ENCODE measurements at regions of chr4 and their contacts with region 1.

Region 1: DNA sequence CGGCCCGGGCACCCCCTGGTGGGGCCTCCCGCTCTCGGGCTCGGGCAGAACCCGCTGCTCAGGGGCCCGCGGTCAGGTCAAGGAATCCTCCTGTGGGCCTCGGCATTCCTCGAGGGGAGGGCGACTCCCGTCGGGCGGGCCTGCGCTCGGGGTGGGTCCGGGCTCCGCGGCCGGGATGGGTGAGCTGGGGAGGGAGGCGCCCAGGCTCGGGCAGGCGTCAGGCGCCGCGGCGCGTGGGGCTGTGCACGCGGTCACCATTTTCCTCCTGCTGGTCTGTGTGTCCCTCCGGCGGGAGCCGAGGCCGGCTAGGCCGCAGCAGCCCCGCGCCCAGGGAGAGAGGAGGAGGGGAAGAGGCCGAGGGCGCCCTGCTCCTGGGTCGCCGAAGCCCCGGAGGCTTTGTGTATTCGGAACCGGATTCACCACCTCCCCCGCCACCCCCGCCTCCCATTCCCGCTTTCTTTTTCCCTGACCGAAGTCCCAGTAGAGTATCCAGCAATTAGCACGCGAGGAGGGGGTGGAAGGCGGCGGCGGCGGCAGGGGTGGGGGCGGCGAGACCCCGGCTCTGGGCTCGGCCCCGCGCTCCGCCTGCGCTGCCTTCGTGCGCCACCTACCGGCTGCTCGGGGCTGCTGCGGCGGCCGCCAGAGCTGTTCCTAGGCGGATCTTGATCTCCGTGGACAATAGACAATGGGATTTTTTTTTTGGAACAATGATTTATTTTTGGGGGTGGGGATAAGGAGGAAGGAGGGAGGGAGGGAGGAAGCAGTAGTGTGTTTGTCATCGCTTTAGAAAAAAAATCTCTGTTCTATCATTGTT is 99.0 kb upstream of the MAML3 start:
- DNase-seq: peak; percentile 77 to 90
- ATAC-seq: peak; percentile 93
- H3K4me3 ChIP-seq: peak overlapping the region; percentile 48 to 70
- H3K27ac ChIP-seq: peak overlapping the region in 1 of 2 donors; percentile 31
- H3K4me1 ChIP-seq: peaks cover 0 to 4% of the 10 kb centered on the region in 2 donors
- H3K27me3 ChIP-seq: no peaks in the 10 kb centered on the region

Region 2: GRCh38 chr4:139734875-139735380 is 518.0 kb before region 1 on chr4:
- intact Hi-C with region 1: loop called (anchors 2 to 5 kb)
- DNase-seq: peak; percentile 89 to 95
- ATAC-seq: peak; percentile 98
- H3K4me3 ChIP-seq: peak overlapping the region; percentile 57 to 72
- H3K27ac ChIP-seq: peak overlapping the region in 1 of 2 donors; percentile 2
- H3K4me1 ChIP-seq: peaks cover under 1 to 2% of the 10 kb centered on the region in 2 donors
- H3K27me3 ChIP-seq: no peaks in the 10 kb centered on the region

Region 3: DNA sequence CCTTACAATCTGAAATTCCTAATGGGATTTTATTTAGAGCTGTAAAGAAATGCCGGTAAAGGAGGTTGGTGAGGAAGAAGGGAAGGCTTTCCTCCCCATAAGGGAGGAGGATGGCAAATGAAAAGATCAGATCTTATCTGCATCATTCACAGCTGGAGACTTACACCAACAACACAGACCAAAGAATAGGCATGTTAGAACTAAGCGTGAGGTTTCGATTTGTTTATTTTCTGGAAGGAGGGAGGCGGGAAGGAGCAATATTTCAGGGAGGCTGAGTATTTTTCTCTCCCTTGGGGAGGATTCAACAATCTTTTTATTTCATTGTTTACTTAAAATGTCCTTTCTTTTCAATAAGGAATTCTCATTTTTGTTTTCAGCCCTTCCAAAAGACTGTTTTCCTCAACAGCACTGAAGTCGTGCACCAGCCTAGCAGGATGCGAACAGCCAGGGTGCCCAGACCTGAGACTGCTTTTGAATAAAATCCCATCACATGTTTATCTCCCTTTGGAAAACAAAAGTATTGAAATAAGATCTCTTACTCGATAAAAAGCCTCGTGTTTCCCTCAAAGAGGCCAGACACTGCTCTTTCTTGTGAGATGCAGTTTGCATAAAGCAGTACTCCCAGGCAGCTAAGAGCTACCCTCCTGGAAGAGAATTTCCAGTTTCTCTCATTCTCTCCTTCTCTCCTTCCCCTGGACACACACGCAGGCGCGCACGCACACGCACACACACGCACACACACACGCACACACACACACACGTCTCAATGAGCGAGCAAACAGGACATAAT is 351.2 kb before region 1 on chr4:
- intact Hi-C with region 1: loop called in 1 of 2 experiments (anchors 5 kb)
- DNase-seq: no peak
- ATAC-seq: peak; percentile 80
- H3K4me3 ChIP-seq: peak overlapping the region in 1 of 2 donors; percentile 45
- H3K27ac ChIP-seq: no peak overlapping the region
- H3K4me1 ChIP-seq: no peaks in the 10 kb centered on the region
- H3K27me3 ChIP-seq: no peaks in the 10 kb centered on the region

Region 4: DNA sequence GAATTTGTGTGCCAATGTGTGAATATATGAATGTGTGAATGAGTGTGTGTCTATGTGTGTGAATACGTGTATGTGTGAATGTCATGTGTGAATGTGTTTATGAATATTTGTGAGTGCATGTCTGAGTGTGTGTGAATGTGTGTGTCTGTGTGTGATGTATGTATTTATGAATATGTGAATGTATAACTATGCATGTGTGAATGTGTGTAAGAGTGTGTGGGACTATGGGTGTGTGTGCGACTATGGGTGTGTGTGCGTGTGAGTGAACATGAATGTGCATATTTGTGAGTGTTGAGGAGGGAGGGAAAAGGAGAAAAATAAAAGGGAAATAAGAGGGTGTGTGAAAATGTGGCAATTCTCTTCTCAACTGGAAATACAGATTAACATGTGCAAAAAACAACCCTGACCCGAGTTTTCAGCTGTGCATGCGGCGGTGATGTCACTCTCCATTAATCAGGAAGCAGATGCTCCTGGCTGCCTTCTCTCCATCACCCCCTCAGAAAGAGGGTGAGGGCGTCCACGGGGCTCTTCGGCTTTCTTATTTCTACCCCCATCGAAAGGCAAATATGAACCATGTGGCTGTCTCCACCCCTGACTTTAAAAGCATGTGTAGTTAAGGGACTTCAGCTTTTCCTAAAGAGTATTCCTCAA is 318.8 kb before region 1 on chr4:
- intact Hi-C with region 1: no loop called
- DNase-seq: no peak
- ATAC-seq: no peak
- H3K4me3 ChIP-seq: no peak overlapping the region
- H3K27ac ChIP-seq: no peak overlapping the region
- H3K4me1 ChIP-seq: no peaks in the 10 kb centered on the region
- H3K27me3 ChIP-seq: no peaks in the 10 kb centered on the region

Region 5: DNA sequence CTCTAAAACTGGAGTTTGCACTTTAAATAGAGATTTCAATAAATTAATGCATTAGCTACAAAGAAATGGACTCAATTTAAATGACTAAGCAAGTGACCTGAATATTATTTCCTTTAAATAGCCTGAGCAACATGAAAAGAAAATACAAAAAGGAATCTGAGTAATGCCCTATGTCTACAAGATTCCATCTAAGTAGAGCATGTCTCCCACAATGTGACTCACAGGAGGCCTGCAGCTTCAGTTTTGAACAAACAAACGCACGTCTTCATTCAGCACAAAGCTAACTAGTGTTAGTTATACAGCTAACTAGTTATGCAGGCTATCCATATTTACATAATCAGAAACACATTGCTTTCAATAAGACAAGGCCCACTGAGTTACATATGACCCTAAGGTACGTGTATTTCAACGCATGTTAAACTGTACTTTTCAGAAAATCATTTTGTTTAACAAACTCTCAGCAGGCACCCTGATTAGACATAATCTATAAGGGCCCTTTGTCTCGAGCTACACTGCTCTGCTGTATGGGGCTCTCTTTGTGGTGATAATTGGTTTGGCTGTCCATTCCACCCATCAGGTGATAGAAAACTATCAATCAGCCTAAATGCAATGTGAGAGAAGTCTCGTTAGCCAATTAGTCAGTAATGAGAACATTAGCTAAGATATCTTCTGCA is 215.5 kb before region 1 on chr4:
- intact Hi-C with region 1: no loop called
- DNase-seq: no peak
- ATAC-seq: no peak
- H3K4me3 ChIP-seq: no peak overlapping the region
- H3K27ac ChIP-seq: peak overlapping the region in 1 of 2 donors; percentile 48
- H3K4me1 ChIP-seq: peaks cover 7 to 11% of the 10 kb centered on the region in 2 donors
- H3K27me3 ChIP-seq: no peaks in the 10 kb centered on the region

Region 6: DNA sequence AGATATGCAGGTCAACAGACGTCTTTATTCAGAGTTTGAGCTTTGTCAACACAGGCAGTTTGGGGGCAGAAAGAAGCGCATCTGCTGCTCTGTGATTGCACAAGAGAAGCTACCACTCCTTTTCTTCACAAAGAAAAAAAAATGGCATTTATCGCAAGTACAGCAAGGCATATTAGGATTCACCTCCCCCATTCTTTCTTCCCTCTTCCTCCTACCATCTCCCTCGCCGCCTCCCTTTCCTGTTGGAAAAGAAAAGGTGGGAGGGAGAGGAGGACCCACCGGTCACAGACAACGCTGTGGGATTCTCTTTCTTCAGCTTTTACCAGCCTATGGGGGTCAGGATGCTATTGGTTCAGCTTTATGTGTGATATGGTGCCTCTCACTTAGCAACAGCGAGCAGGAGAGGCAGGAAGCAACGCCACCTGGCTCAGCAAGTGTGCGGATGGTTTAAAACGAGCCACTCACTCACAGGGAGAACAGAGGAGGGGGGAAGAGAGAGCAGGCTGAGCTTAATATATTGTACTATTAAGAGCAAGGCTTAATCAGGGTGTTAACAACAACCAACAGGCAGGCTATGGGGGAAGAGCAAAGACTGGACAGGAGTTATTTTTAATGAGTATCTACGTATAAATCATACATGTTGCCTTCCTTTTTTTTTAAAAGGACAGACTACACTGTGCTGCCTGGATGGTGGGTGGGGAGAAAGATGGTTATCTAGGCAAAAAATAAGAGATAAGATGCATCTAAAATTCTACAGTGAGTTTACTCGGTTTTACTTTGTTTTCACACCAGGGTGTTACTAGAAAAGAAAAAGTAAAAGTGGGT is 203.7 kb before region 1 on chr4:
- intact Hi-C with region 1: loop called (anchors 5 kb)
- DNase-seq: peak in 1 of 2 donors; percentile 46
- ATAC-seq: peak; percentile 80
- H3K4me3 ChIP-seq: peak overlapping the region; percentile 7 to 55
- H3K27ac ChIP-seq: peak overlapping the region in 1 of 2 donors; percentile 1
- H3K4me1 ChIP-seq: peaks cover 3 to 6% of the 10 kb centered on the region in 2 donors
- H3K27me3 ChIP-seq: no peaks in the 10 kb centered on the region

Region 7: GRCh38 chr4:140308366-140309123 is 55.6 kb after region 1 on chr4:
- intact Hi-C with region 1: loop called in 1 of 2 experiments (anchors 5 kb)
- DNase-seq: peak; percentile 83 to 90
- ATAC-seq: peak; percentile 91
- H3K4me3 ChIP-seq: no peak overlapping the region
- H3K27ac ChIP-seq: peak overlapping the region; percentile 20 to 86
- H3K4me1 ChIP-seq: no peaks in the 10 kb centered on the region
- H3K27me3 ChIP-seq: no peaks in the 10 kb centered on the region

Measured in aorta (tissue), 5 donors.